ENCODE measurements at regions of chr15 and their contacts with region 1.

Region 1: DNA sequence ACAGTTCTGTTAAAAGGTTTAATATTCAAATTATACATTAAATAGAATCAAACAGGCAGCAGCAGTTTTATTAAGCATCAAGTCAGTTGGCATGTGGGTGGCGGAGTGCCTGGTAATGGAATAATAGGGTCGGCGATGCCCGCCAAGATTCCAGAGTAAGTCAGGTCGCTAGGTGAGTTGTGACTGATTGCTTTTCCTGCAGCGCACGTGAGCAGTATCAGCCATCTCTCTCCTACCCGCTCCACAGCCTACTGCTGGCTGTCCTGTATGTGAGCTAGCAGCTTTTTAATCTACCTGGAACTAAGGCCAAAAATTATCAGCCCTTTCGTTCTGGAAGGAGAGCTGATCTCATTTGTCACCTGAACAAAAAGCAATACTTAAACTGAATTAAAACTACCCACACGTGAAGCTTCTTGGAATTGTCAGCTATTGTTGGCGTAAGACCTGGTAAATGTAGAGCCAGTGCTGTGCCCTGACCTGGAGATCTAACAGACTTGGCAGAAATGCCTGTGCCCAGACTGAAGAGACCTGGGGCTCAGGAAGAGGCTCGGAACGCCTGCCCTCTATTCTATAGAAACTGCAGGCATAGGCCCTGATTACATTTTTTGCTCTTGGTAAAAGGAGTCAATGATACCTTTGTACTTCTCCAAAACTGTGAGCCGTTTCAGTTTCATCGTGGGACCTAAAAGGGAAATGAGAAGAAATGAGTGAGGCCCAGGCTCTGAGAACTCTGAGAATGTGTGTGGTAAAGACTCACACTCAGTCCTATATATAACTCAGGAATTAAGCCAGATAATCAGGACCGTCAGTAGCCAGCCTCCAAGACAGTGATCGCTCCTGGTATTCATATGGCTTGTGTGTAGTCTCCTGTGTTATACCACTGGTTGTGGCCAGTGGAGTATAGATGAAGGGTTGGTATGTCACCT is 21.9 kb downstream of the IDH3A start:
- DNase-seq: peak; percentile 79
- H3K4me3 ChIP-seq: peak overlapping the region; percentile 38
- H3K27ac ChIP-seq: peak overlapping the region; percentile 94
- H3K4me1 ChIP-seq: peaks cover 85% of the 10 kb centered on the region
- CTCF ChIP-seq: no peak

Region 2: GRCh38 chr15:77798151-77798835 is 372.8 kb before region 1 on chr15:
- CTCF ChIA-PET with region 1: no interaction called
- POLR2A ChIA-PET with region 1: no interaction called
- intact Hi-C with region 1: no loop called
- DNase-seq: no peak
- H3K4me3 ChIP-seq: no peak overlapping the region
- H3K27ac ChIP-seq: peak overlapping the region; percentile 79
- H3K4me1 ChIP-seq: peaks cover 24% of the 10 kb centered on the region
- CTCF ChIP-seq: no peak

Region 3: DNA sequence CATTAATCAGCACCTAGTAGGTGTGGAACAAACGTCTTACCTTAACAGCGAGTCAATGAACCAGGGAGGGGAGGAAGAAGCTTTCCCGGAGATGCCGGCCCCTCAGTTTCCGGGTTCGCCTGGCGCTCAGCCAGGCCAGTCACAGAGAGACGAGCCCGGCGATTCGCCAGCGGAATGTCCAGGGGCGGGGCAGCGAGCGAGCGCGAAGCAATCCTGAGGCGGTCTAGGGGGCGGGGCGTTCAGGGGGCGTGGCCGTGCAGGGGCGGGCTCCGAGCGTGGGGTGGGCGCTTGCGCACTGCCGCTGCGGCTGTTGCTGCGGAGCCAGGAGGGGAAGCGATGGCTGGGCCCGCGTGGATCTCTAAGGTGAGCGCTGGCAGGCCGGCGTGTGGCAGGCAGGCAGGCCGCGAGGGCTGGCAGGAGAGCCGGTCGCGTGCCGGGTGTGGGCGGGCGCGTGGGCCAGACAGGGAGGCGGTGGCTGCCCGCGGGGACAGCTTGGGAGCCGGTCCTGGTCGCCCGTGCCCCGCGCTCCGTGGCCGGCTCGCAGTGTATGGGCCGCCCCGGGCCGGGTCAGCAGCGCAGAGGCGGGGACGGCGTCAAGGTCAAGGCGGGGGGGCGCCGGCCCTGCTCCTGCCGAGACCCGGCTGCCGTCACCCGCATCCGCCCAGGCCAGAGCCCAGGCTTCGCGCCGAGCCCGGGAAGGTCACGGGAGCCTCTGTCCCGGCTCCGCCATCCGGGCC is 21.9 kb before region 1 on chr15 and contains the start of gene IDH3A:
- CTCF ChIA-PET with region 1: interaction called, 3 read pairs
- POLR2A ChIA-PET with region 1: interaction called, 9 read pairs
- intact Hi-C with region 1: loop called (anchors 2 kb)
- DNase-seq: peak; percentile 97
- H3K4me3 ChIP-seq: peak within 1 kb of the TSS; percentile 88
- H3K27ac ChIP-seq: peak within 1 kb of the TSS; percentile 34
- H3K4me1 ChIP-seq: peaks cover 34% of the 10 kb centered on the region
- CTCF ChIP-seq: no peak
- total RNA-seq, gene IDH3A: 47.0 and 84.6 TPM in 2 replicates